ENCODE measurements at regions of chr2 and their contacts with region 1.

Region 1: GRCh38 chr2:110812726-110813645 is 80.6 kb downstream of the ACOXL start:
- DNase-seq: no peak
- ATAC-seq: no peak
- H3K4me3 ChIP-seq: no peak overlapping the region
- H3K4me3 Mint-ChIP-seq: no peak overlapping the region
- H3K27ac ChIP-seq: no peak overlapping the region
- H3K27ac Mint-ChIP-seq: peak overlapping the region in 1 of 9 donors; percentile 24
- H3K4me1 ChIP-seq: peaks cover 0 to 3% of the 10 kb centered on the region in 2 donors
- H3K4me1 Mint-ChIP-seq: peaks cover 0 to 12% (median 5%) of the 10 kb centered on the region in 7 donors
- H3K27me3 ChIP-seq: no peaks in the 10 kb centered on the region
- H3K27me3 Mint-ChIP-seq: peaks cover 0 to 28% (median 4%) of the 10 kb centered on the region in 5 donors

Region 2: GRCh38 chr2:110748489-110748867 is 64.5 kb before region 1 on chr2:
- CTCF ChIA-PET with region 1: no interaction called
- POLR2A ChIA-PET with region 1: no interaction called
- intact Hi-C with region 1: no loop called
- DNase-seq: peak in 6 of 9 donors; percentile 7 to 77 (median 16)
- ATAC-seq: peak; percentile 86
- H3K4me3 ChIP-seq: peak overlapping the region; percentile 0
- H3K4me3 Mint-ChIP-seq: peak overlapping the region in 9 of 10 donors; percentile 7 to 72 (median 43)
- H3K27ac ChIP-seq: no peak overlapping the region
- H3K27ac Mint-ChIP-seq: peak overlapping the region in 1 of 9 donors; percentile 79
- H3K4me1 ChIP-seq: peaks cover 11 to 13% of the 10 kb centered on the region in 2 donors
- H3K4me1 Mint-ChIP-seq: peaks cover 12 to 45% (median 16%) of the 10 kb centered on the region in 7 donors
- H3K27me3 ChIP-seq: no peaks in the 10 kb centered on the region
- H3K27me3 Mint-ChIP-seq: peaks cover 34 to 53% (median 37%) of the 10 kb centered on the region in 5 donors

Region 3: DNA sequence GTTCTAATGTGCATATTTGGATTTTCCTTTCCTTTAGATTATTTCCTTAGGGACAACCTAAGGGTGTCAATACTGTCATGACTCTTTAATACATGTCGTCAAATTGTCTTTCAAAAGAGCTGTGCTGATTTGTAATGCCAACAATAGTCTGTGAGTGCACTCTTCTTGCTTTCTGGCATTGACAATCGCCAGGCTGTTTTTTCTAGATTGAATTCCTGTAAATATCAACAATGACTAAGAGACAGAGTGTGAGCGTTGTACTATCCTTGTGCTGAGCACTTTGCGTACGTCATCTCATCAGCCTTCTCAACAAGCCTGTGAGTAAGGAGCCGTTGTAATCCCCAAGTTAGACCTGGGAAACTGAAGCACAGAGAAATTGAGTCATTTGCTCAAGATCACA is 15.3 kb after region 1 on chr2:
- CTCF ChIA-PET with region 1: no interaction called
- POLR2A ChIA-PET with region 1: no interaction called
- intact Hi-C with region 1: no loop called
- DNase-seq: no peak
- ATAC-seq: no peak
- H3K4me3 ChIP-seq: no peak overlapping the region
- H3K4me3 Mint-ChIP-seq: no peak overlapping the region
- H3K27ac ChIP-seq: no peak overlapping the region
- H3K27ac Mint-ChIP-seq: no peak overlapping the region
- H3K4me1 ChIP-seq: peaks cover 0 to 7% of the 10 kb centered on the region in 2 donors
- H3K4me1 Mint-ChIP-seq: peaks cover 4 to 18% (median 8%) of the 10 kb centered on the region in 7 donors
- H3K27me3 ChIP-seq: no peaks in the 10 kb centered on the region
- H3K27me3 Mint-ChIP-seq: peaks cover 0 to 71% (median 0%) of the 10 kb centered on the region in 5 donors

Region 4: GRCh38 chr2:112048887-112049286 is 1235.9 kb after region 1 on chr2:
- CTCF ChIA-PET with region 1: no interaction called
- POLR2A ChIA-PET with region 1: no interaction called
- intact Hi-C with region 1: loop called in 1 of 2 experiments (anchors 5 kb)
- DNase-seq: peak in 7 of 9 donors; percentile 46 to 70 (median 61)
- ATAC-seq: peak; percentile 78
- H3K4me3 ChIP-seq: no peak overlapping the region
- H3K4me3 Mint-ChIP-seq: no peak overlapping the region
- H3K27ac ChIP-seq: no peak overlapping the region
- H3K27ac Mint-ChIP-seq: no peak overlapping the region
- H3K4me1 ChIP-seq: peaks cover 5 to 7% of the 10 kb centered on the region in 2 donors
- H3K4me1 Mint-ChIP-seq: peaks cover 6 to 12% (median 8%) of the 10 kb centered on the region in 7 donors
- H3K27me3 ChIP-seq: no peaks in the 10 kb centered on the region
- H3K27me3 Mint-ChIP-seq: peaks cover 0 to 23% (median 0%) of the 10 kb centered on the region in 5 donors